Activated T-helper 1 cell treated with anti-CD3 and anti-CD28 coated beads, Interleukin-12 subunit alpha, Interleukin-12 subunit beta, Interleukin-2, Interleukin-4 antibody, amounts not matched to agents 30 ng/mL and 10 ng/mL and 1 ng/mL, durations not matched to agents 14 hours and 24 hours and 36 hours (primary cell): ENCODE measurements at regions of chr1 and their contacts with region 1.

Region 1: GRCh38 chr1:65687428-65688214 is 105.1 kb upstream of the PDE4B start:
- DNase-seq: peak; percentile 62
- H3K4me3 Mint-ChIP-seq: no peak overlapping the region
- H3K27ac Mint-ChIP-seq: no peak overlapping the region
- H3K4me1 Mint-ChIP-seq: peaks cover 14% of the 10 kb centered on the region
- H3K27me3 Mint-ChIP-seq: peaks cover 22% of the 10 kb centered on the region

Region 2: DNA sequence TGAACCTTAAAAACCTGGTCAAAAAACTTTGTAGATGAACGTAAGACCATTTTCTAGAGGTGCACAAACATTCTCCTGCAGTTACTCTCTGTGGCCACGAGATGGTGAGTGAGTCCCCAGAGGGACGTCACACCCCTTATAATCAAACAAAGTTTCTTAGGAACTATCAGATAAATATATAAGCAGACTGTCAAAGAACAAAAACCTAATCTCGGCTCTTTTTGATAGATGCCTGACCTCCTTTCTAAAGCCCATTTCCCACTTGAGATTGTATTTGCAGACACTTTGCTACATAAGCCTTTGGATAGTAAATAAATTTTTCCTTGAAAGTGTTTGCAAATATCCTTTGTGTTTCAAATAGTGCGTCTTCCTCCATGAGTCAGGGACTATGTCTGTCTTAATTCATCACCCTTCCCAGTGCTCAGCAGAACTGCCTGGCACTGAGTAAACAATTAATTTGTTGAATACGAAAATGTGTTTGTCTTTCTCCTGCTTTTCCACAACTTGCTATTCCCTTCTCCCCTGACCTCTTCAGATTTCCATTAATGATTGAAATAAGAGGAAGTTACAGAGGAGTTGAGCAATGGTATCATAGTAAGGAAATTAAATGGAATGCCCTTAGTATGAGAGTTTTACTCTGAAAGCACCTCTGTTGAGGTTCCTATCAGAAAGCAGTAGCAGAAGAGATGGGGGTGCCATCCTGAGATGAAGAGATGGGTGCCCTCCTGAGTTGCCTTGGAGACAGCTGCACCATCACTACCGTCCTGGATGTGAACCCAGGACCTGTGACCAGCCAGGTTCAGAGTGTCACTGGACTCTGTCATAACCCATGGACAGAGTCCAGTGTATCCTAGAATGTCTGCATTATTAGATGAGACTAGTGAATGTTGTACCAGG is 1000.5 kb before region 1 on chr1:
- intact Hi-C with region 1: loop called (anchors 1 kb)
- DNase-seq: no peak
- H3K4me3 Mint-ChIP-seq: no peak overlapping the region
- H3K27ac Mint-ChIP-seq: no peak overlapping the region
- H3K4me1 Mint-ChIP-seq: peaks cover 7% of the 10 kb centered on the region
- H3K27me3 Mint-ChIP-seq: no peaks in the 10 kb centered on the region

Region 3: DNA sequence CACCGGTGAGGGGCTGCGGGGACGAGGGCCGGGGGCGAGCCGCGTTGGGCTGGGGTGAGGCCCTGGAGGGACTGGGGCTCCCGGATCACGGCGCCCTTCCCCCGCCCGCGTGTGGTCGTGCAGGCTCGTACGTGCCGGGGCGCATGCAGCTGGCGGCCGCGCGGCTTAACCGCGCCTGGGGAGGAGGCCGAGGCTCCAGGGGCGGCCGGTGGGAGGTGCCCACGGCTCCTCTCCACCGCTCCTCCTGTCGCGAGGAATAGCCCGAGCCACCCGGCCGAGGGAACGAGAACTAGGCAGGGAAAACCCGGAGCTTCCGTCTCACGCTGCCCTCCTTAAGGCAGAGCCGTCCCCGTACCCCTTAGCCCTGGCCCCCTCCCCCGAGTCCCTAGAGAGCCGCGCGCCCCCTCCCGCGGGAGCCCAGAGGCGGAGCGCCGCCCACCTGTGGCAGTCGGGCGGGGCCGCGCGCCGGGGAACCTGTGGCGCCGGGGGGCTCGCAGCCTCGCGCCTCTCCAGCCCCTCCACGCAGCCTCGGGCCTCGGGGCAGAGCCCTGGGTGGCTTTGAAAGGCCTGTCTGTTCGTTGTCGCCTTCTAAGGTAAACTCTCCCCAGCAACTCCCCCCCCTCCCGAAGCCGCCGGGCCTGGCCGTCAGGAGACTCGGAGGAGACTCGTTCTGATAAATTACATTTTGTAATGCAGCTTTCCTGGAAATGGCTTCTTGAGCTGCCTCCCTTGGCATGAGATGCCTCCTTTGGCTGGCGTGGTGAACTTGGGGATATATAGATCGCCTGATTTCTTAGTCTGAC is 538.9 kb before region 1 on chr1:
- intact Hi-C with region 1: loop called (anchors 5 kb)
- DNase-seq: peak; percentile 55
- H3K4me3 Mint-ChIP-seq: peak overlapping the region; percentile 94
- H3K27ac Mint-ChIP-seq: peak overlapping the region; percentile 90
- H3K4me1 Mint-ChIP-seq: peaks cover 52% of the 10 kb centered on the region
- H3K27me3 Mint-ChIP-seq: peaks cover 7% of the 10 kb centered on the region

Region 4: DNA sequence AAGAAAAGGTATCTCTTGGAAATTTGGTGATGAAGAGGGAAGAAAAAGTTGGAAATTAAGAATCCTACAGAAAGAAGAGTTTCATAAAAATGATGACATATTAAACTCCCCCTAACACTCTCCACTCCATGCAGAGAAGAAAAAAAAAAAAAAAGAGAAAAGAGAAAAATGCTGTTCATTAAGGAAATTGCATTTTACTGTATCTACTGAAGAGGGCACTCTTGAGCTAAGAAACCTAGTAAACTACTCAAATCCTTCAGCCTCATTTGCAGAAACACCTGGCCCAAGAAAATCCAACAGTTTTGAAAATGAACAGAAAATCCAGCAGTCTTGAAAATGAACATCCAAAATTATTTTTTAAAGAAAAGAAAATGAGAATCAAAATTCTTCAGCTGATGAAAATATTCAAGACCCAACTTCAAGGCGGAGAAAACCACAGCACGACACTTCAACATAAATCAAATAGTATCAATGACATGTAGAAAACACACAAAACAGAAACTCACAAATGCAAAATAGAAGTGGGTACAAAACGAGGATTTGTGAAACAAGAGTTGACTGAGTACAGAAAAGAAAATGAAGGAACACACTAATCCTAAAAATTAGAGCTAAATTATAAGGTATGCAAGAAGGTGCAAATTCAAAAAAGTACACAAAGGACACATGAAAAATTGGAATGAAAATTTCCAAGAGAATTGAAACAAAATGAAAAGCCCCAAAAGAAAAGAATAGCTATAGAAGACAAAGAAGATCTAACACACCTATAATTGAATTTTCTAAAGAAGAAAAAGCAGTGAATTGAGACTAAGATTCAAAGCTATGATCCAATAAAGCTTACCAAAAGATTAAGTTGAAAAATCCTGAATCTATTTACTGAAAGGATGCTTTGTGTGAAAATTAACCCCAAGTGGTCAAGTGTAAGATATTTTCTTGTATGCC is 451.5 kb before region 1 on chr1:
- intact Hi-C with region 1: loop called (anchors 1 kb)
- DNase-seq: no peak
- H3K4me3 Mint-ChIP-seq: no peak overlapping the region
- H3K27ac Mint-ChIP-seq: no peak overlapping the region
- H3K4me1 Mint-ChIP-seq: peaks cover 15% of the 10 kb centered on the region
- H3K27me3 Mint-ChIP-seq: peaks cover 2% of the 10 kb centered on the region

Region 5: GRCh38 chr1:65289449-65289848 is 398.2 kb before region 1 on chr1:
- intact Hi-C with region 1: no loop called
- DNase-seq: no peak
- H3K4me3 Mint-ChIP-seq: no peak overlapping the region
- H3K27ac Mint-ChIP-seq: no peak overlapping the region
- H3K4me1 Mint-ChIP-seq: peaks cover 4% of the 10 kb centered on the region
- H3K27me3 Mint-ChIP-seq: no peaks in the 10 kb centered on the region

Region 6: DNA sequence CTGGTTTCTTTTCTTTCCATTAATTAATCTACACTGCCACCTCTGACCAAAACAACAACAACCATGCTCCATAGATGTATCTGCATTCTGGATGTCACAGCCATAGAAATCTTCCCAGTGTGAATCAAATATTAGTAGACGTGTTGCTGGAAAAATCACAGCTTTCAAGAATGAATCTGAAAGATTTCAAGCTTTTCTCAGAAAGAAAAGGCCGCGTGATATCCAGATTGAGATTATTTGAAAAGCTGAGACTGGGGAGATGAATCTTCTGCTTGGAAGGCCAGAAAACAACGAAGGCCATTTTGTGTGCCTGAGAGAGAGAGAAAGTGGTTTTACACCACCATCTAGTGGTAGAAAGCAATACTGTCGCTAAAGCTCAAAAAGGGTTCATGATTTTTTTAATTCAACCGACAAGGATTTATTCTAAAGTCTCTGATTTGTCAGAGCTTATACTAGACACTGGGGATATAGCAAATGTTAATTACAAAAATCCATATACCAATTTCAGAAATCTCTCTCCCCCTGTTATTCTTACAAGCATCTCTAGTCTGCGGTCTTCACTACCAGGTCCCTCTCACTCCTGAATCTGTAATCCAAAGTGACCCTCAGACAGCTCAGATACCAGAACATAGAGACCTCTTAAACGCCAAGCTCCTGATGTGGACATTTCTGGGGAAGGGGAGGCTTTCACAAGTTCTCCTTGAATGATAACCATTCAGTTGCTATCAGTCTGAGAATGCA is 758.8 kb after region 1 on chr1:
- intact Hi-C with region 1: loop called (anchors 5 kb)
- DNase-seq: peak; percentile 39
- H3K4me3 Mint-ChIP-seq: peak overlapping the region; percentile 56
- H3K27ac Mint-ChIP-seq: peak overlapping the region; percentile 95
- H3K4me1 Mint-ChIP-seq: peaks cover 32% of the 10 kb centered on the region
- H3K27me3 Mint-ChIP-seq: peaks cover 3% of the 10 kb centered on the region